ENCODE measurements at regions of chr6 and their contacts with region 1.

Region 1: DNA sequence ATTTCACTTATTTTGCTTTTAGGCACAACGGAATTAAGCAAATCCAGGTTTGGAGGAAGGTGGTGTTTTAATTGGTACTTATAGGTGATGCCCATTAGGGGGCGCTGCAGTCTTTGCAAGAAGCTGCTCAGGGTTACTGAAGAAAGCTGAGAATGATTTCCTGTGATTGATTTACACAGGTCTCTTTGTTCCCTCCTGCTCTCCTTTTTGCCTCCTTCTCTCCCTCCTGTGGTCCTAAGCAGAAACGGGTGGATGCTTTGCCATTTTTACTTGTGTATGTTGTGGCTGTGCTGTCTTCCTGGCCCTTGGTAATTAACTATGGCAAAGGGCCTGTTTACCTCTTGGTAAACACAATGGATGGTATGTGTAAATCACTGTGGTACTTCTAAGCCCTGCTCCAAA is 97.8 kb downstream of the ANKS1A start:
- H3K4me3 ChIP-seq: no peak overlapping the region
- H3K27ac ChIP-seq: no peak overlapping the region
- H3K4me1 ChIP-seq: no peaks in the 10 kb centered on the region
- CTCF ChIP-seq: peak; percentile 70

Region 2: GRCh38 chr6:34941421-34941820 is 45.4 kb before region 1 on chr6:
- CTCF ChIA-PET with region 1: interaction called, 10 read pairs
- POLR2A ChIA-PET with region 1: no interaction called
- H3K4me3 ChIP-seq: no peak overlapping the region
- H3K27ac ChIP-seq: no peak overlapping the region
- H3K4me1 ChIP-seq: no peaks in the 10 kb centered on the region
- CTCF ChIP-seq: no peak

Region 3: DNA sequence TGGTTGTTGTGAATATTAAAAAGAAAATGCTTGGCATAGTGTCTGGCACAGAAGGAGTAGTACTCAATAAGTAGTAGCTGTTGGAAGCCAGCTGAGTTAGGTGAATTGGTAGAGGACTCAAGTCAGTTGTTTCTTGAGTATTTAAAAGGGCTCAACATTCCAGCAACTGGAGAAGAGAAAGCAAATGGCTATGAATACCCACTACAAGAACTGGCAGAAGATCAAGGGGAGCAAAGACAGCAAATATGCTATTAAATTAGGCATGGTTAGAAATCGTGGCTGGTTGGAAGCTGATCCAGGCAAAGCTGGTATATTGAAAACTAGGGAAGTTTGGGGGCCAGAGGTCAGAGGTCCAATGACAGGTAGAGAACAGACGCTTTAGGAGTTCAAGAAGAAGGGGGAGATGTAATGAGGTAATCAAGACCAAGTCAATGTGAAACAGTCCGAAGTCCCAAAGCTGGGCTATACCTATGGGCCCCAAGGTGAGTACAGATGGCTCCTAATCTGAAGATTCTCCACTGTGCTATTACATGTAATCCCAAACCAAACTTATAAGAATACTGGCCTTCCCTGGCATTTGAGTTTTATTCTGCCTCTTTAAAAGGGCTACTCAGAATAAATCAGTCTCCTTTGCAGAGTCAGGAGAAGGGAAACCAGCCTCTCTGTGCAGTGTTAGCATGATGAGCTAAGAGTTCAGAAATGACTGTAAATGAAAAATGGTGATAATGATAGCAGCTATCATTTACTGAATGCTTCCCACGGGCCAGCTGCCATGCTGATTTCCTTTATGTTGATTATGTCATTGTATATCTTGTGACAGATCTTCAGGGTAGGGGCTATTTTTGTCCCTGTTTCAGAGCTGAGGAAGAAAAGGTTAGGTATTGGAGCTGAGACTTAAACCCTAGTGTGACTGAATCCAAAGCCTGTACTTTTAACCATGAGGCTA is 24.5 kb after region 1 on chr6:
- CTCF ChIA-PET with region 1: interaction called, 16 read pairs
- POLR2A ChIA-PET with region 1: no interaction called
- H3K4me3 ChIP-seq: no peak overlapping the region
- H3K27ac ChIP-seq: no peak overlapping the region
- H3K4me1 ChIP-seq: peaks cover 6% of the 10 kb centered on the region
- CTCF ChIP-seq: no peak

Region 4: GRCh38 chr6:35089935-35090505 is 103.2 kb after region 1 on chr6:
- CTCF ChIA-PET with region 1: interaction called, 12 read pairs
- POLR2A ChIA-PET with region 1: no interaction called
- H3K4me3 ChIP-seq: no peak overlapping the region
- H3K27ac ChIP-seq: no peak overlapping the region
- H3K4me1 ChIP-seq: no peaks in the 10 kb centered on the region
- CTCF ChIP-seq: no peak

Region 5: DNA sequence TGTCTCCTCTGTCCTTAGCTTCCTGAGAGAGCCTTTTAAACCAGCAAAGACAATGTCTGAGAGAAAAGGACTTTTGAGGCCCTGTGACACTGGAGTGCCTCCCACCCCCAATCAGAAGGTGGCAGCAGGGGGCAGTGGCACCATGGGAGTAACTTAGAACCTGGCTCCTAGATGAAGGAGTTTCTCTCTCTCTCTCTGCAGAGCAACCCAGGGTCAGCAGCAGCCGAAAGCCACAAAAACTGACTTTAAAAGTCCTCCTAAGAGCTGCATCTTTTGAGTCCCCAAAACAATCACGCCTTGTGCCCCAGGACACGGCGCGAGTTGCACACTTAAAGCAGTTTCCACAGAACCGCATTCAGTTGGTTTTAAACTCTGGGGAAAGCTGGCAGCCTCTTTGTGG is 159.6 kb after region 1 on chr6:
- CTCF ChIA-PET with region 1: interaction called, 165 read pairs
- POLR2A ChIA-PET with region 1: no interaction called
- H3K4me3 ChIP-seq: no peak overlapping the region
- H3K27ac ChIP-seq: no peak overlapping the region
- H3K4me1 ChIP-seq: peaks cover 2% of the 10 kb centered on the region; the same call in 1 of the 2 replicates
- CTCF ChIP-seq: peak; percentile 79

Measured in HEK293 (cell line).